HCT116 (cell line): ENCODE measurements at regions of chr11 and their contacts with region 1.

Region 1: DNA sequence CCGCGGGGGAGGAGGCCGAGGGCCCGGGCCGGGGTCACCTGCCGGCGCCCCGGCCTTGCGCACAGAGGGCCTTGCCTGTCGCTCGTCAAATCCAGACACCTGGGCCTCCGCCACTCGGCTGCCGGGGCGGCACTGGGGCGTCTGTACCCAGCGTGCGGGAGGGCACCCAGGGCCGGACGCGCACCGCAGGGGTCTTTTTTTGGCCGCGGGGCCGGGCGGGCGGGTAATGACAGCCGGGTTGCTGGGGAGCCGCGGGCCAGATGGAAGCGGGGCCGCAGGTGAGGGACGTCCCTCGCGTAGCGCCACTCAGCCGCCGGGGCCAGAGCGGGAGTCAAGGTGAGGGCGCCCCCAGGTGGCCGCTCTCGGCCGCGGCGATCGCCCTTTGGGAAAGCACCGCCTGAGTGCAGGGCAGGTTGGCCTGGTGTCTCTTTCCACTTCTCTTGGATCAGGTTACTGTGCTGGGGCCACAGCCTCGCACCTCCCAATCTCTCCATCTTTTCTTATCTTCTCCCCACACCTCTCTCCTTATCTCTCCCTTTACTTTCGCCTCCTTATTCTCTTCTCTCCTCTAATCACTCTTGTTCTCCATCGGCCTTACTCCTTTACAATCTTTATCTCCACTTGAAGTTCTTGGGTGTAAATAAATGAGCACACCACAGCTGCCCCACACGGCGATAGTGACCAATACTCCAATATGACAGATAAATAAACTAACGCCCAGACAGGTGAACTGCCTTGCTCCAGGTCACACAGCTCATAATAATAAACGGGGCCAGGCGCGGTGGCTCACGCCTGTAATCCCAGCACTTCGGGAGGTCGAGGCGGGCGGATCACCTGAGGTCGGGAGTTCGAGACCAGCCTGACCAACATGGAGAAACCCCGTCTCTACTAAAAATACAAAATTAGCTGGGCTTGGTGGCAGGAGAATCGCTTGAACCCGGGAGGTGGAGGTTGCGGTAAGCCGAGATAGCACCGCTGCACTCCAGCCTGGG is 3.7 kb downstream of the PHLDB1 start:
- DNase-seq: no peak
- ATAC-seq: peak; percentile 71
- H3K4me3 ChIP-seq: no peak overlapping the region
- H3K27ac ChIP-seq: no peak overlapping the region
- H3K4me1 ChIP-seq: peaks cover 10 to 41% of the 10 kb centered on the region in 2 experiments
- H3K27me3 ChIP-seq: no peaks in the 10 kb centered on the region
- CTCF ChIP-seq: peak; percentile 69 to 92 (median 85)
- POLR2A ChIP-seq: no peak
- RAD21 ChIP-seq: peak; percentile 75

Region 2: DNA sequence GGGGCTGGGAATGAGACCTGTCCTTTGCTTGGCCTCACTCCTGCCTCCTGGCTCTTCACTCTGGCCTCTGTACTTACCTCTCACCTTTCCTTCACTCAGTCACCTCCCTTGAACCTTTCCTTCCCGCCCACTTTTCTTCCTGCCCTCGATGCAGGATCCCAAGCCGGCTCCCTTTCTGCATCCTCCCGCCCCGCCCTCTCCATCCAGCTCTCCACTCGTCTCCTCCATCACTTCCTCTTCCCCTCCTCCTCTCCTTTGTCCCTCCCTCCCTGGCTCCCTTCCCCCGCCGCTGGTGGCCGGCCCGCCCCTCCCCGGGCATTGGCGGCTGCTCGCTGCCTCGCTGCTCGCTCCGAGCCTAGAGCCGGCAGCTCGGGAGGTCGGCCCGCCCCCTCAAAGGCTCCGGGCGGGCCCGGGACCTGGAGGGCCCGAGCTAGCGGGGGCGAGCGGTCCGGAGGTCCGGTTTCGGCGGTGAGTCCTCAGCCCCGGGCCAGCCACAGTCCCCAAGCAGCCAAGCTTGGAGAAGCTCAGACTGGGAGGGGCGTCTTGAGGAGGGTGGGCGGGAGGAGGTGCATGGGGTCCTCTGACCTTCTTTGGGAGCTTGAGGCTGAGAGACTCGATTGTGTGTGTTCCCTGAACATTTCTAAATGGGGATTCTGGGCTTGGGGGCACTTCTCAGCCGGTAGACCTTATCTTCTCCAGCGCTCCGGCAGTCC is 10.1 kb after region 1 on chr11:
- CTCF ChIA-PET with region 1: interaction called, 7 read pairs
- POLR2A ChIA-PET with region 1: interaction called, 19 read pairs
- RAD21 ChIA-PET with region 1: no interaction called
- intact Hi-C with region 1: no loop called
- DNase-seq: peak; percentile 51
- ATAC-seq: peak; percentile 79
- H3K4me3 ChIP-seq: peak overlapping the region; percentile 62 to 84
- H3K27ac ChIP-seq: peak overlapping the region; percentile 96
- H3K4me1 ChIP-seq: peaks cover 61 to 73% of the 10 kb centered on the region in 2 experiments
- H3K27me3 ChIP-seq: no peaks in the 10 kb centered on the region
- CTCF ChIP-seq: no peak
- POLR2A ChIP-seq: peak; percentile 46
- RAD21 ChIP-seq: no peak

Region 3: DNA sequence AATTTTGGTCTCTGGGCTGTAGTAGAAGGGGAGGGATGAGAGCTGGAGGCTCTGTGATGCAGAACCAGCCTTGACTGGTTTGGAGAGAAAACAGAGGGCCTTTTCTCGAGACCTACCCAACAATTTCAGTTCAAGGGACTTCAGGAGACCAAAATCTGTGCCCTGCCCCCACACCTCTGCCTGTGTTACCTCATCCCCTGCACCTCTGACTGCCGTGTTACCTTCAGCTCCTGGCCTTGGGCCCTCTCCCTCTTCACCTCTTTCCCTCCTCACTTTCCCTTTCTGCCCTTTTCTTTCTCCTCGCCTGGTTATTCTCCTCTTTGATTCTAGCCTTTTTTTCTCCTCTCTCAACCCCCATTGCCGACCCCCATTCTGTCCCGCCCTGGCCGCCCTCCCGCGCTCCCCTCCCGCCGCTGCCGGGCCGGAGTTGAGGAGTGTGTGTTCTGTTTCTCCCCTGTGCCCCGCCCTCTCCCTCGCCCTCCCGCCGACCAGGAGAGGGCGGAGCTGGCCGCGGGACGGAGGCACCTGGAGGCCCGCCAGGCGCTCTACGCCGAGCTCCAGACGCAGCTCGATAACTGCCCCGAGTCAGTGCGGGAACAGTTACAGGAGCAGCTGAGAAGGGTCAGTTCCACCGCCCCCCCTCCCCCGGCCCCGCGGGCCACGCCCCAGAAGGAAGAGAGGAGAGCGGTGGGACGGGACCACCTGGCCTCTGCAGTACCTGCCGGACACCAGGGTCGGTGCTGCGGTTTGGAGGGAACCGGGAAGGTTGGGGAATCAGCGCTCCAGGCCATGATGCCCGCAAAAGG is 23.5 kb after region 1 on chr11:
- CTCF ChIA-PET with region 1: interaction called, 10 read pairs
- POLR2A ChIA-PET with region 1: interaction called, 3 read pairs
- RAD21 ChIA-PET with region 1: interaction called in 1 of 2 experiments, 4 read pairs
- intact Hi-C with region 1: no loop called
- DNase-seq: no peak
- ATAC-seq: peak; percentile 94
- H3K4me3 ChIP-seq: peak overlapping the region; percentile 33 to 50
- H3K27ac ChIP-seq: peak overlapping the region; percentile 42; the same call in 1 of the 2 replicates
- H3K4me1 ChIP-seq: peaks cover 9 to 42% of the 10 kb centered on the region in 2 experiments; a peak in 3 of 4 replicates
- H3K27me3 ChIP-seq: no peaks in the 10 kb centered on the region
- CTCF ChIP-seq: peak in 2 of 3 experiments; percentile 10 to 18; a peak in 2 of 6 replicates
- POLR2A ChIP-seq: no peak
- RAD21 ChIP-seq: no peak

Region 4: GRCh38 chr11:118659314-118659952 is 48.3 kb after region 1 on chr11:
- CTCF ChIA-PET with region 1: interaction called, 5 read pairs
- POLR2A ChIA-PET with region 1: no interaction called
- RAD21 ChIA-PET with region 1: no interaction called
- intact Hi-C with region 1: loop called (anchors 2 kb)
- DNase-seq: peak; percentile 65
- ATAC-seq: peak; percentile 92
- H3K4me3 ChIP-seq: no peak overlapping the region
- H3K27ac ChIP-seq: no peak overlapping the region; the same call in 1 of the 2 replicates
- H3K4me1 ChIP-seq: peaks cover 7 to 16% of the 10 kb centered on the region in 2 experiments; a peak in 3 of 4 replicates
- H3K27me3 ChIP-seq: no peaks in the 10 kb centered on the region
- CTCF ChIP-seq: peak; percentile 97 to 99 (median 98)
- POLR2A ChIP-seq: no peak
- RAD21 ChIP-seq: peak; percentile 96